BJ (cell line): ENCODE measurements at regions of chr10 and their contacts with region 1.

Region 1: GRCh38 chr10:117442944-117443685 is 67.9 kb upstream of the PDZD8 start:
- DNase-seq: no peak
- H3K4me3 ChIP-seq: no peak overlapping the region
- H3K27me3 ChIP-seq: peaks cover 2% of the 10 kb centered on the region
- CTCF ChIP-seq: peak; percentile 89

Region 2: DNA sequence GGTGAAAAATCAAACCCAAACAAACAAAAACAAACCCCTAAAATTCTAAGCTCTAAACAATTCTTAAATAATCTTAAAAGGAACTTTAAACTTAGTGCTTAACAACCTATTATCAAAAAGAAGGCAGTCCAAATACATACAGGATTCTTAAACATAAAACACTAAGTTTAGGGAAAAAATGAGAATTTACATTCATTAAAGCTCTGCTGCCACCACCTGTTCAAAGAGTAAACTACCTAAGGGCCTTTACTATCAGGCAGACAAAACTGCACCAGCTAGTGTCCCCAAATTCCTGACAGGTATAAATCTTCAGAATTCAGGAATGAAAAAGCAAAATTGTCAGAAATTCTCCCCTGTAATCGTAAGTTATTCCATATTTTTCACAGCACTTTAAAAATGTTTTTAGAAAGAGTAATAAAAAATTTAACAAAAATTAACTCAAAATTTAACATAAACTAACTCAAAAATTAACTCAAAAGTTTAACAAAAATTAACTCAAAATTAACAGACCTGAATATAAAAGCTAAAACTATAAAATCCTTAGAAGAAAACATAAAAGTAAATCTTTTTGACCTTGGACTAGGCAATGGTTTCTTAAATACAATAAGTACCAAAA is 123.0 kb before region 1 on chr10:
- CTCF ChIA-PET with region 1: interaction called, 10 read pairs
- POLR2A ChIA-PET with region 1: no interaction called
- DNase-seq: no peak
- H3K4me3 ChIP-seq: no peak overlapping the region
- H3K27me3 ChIP-seq: no peaks in the 10 kb centered on the region
- CTCF ChIP-seq: peak; percentile 64

Region 3: DNA sequence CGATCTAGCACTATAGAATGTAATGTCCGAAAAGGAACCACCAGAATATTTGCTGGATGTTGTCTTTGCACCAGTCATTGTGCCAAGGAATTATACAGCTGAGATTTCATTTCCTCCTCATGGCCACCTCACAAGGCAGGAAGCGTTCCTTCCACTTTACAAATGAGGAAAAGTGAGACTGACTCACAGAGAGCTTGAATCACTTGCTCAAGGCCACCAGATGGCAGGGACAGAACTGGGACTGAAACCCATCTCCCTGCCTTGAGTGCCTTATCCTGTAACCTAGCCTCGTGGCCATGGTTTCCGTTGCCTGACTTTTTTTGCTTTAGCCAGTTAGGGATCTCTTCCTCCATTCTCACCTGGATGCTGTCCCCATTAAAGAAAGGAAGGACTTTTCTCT is 23.2 kb before region 1 on chr10:
- CTCF ChIA-PET with region 1: no interaction called
- POLR2A ChIA-PET with region 1: no interaction called
- DNase-seq: no peak
- H3K4me3 ChIP-seq: no peak overlapping the region
- H3K27me3 ChIP-seq: peaks cover 2% of the 10 kb centered on the region; the same call in 1 of the 2 replicates
- CTCF ChIP-seq: no peak

Region 4: GRCh38 chr10:117431160-117431559 is 12.0 kb before region 1 on chr10:
- CTCF ChIA-PET with region 1: interaction called, 20 read pairs
- POLR2A ChIA-PET with region 1: no interaction called
- DNase-seq: no peak
- H3K4me3 ChIP-seq: no peak overlapping the region
- H3K27me3 ChIP-seq: peaks cover 8% of the 10 kb centered on the region; the same call in 1 of the 2 replicates
- CTCF ChIP-seq: peak; percentile 31; the same call in 1 of the 2 replicates

Region 5: GRCh38 chr10:117461766-117462423 is 18.8 kb after region 1 on chr10:
- CTCF ChIA-PET with region 1: interaction called, 26 read pairs
- POLR2A ChIA-PET with region 1: interaction called, 7 read pairs
- DNase-seq: peak; percentile 98
- H3K4me3 ChIP-seq: no peak overlapping the region
- H3K27me3 ChIP-seq: no peaks in the 10 kb centered on the region
- CTCF ChIP-seq: no peak

Region 6: DNA sequence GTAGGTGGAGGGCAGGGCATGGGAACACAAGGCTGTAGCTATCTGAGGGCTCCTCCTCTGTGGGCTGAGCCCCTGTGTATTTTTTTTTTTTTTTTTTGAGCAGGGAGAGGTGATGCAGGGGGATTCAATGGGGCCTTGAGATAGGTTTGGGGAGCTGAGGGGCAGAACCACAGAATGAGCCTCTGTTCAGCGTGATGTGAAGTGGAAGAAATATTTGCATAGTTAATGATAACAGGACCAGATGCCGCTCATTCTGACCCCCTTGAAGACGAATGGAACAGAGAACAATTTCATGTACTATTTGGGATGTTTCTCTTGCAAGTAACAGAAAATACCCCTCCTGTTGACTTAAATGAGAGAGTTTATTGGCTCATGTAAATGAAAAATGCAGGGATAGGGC is 29.8 kb after region 1 on chr10:
- CTCF ChIA-PET with region 1: interaction called, 57 read pairs
- POLR2A ChIA-PET with region 1: interaction called, 3 read pairs
- DNase-seq: no peak
- H3K4me3 ChIP-seq: no peak overlapping the region
- H3K27me3 ChIP-seq: peaks cover 9% of the 10 kb centered on the region
- CTCF ChIP-seq: no peak

Region 7: DNA sequence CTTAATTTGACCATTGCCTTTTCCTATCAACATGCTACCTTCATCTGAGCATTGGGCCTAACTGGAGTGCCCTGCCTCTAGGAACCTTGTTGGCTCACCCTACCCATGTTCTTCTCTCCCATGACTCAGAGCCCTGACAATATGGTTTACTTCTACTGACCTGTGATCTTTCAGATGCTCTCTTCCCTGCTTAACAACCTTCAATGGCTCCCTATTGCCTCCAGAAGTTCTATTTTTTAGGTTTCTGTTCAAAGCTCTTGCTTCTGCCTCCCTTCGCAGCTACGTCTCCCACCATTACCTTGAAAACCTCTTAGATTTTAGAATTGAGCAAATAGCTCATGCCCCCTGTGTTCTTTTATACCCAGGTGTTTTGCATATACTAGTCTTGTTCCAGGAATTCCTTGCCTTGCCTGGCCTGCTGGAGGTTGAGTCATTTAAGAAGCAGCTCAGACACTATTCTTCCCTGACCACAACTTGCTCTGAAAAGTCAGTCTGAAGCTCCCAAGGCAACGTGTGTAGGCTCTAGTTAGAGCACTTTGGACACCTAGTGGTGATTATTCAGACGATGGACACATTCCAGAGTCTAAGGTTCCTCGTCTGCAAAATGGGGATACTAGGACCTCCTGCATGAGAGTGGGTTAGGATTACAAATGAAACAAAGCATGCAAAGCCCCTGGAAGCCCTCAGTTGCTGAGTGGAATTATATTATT is 35.0 kb after region 1 on chr10:
- CTCF ChIA-PET with region 1: interaction called, 57 read pairs
- POLR2A ChIA-PET with region 1: interaction called, 3 read pairs
- DNase-seq: no peak
- H3K4me3 ChIP-seq: no peak overlapping the region
- H3K27me3 ChIP-seq: peaks cover under 1% of the 10 kb centered on the region
- CTCF ChIP-seq: peak; percentile 47